ENCODE measurements at regions of chr11 and their contacts with region 1.

Region 1: GRCh38 chr11:35391922-35392813 is 27.2 kb downstream of the SLC1A2 start:
- DNase-seq: peak; percentile 94
- H3K4me3 ChIP-seq: no peak overlapping the region
- H3K27ac ChIP-seq: no peak overlapping the region
- H3K4me1 ChIP-seq: peaks cover 18% of the 10 kb centered on the region
- H3K27me3 ChIP-seq: peaks cover 4% of the 10 kb centered on the region
- CTCF ChIP-seq: peak; percentile 100

Region 2: GRCh38 chr11:34366522-34366921 is 1025.6 kb before region 1 on chr11:
- CTCF ChIA-PET with region 1: no interaction called
- POLR2A ChIA-PET with region 1: no interaction called
- intact Hi-C with region 1: loop called (anchors 5 kb)
- DNase-seq: peak; percentile 74
- H3K4me3 ChIP-seq: no peak overlapping the region
- H3K27ac ChIP-seq: no peak overlapping the region
- H3K4me1 ChIP-seq: peaks cover 9% of the 10 kb centered on the region
- H3K27me3 ChIP-seq: no peaks in the 10 kb centered on the region
- CTCF ChIP-seq: peak; percentile 80

Region 3: GRCh38 chr11:34585735-34586487 is 806.3 kb before region 1 on chr11:
- CTCF ChIA-PET with region 1: no interaction called
- POLR2A ChIA-PET with region 1: no interaction called
- intact Hi-C with region 1: loop called (anchors 1 kb)
- DNase-seq: peak; percentile 86
- H3K4me3 ChIP-seq: no peak overlapping the region
- H3K27ac ChIP-seq: no peak overlapping the region
- H3K4me1 ChIP-seq: peaks cover 3% of the 10 kb centered on the region
- H3K27me3 ChIP-seq: peaks cover 39% of the 10 kb centered on the region
- CTCF ChIP-seq: peak; percentile 94

Region 4: GRCh38 chr11:34926101-34926830 is 465.9 kb before region 1 on chr11:
- CTCF ChIA-PET with region 1: interaction called, 18 read pairs
- POLR2A ChIA-PET with region 1: no interaction called
- intact Hi-C with region 1: loop called (anchors 1 kb)
- DNase-seq: peak; percentile 89
- H3K4me3 ChIP-seq: no peak overlapping the region
- H3K27ac ChIP-seq: no peak overlapping the region
- H3K4me1 ChIP-seq: peaks cover 25% of the 10 kb centered on the region
- H3K27me3 ChIP-seq: no peaks in the 10 kb centered on the region
- CTCF ChIP-seq: peak; percentile 98

Region 5: DNA sequence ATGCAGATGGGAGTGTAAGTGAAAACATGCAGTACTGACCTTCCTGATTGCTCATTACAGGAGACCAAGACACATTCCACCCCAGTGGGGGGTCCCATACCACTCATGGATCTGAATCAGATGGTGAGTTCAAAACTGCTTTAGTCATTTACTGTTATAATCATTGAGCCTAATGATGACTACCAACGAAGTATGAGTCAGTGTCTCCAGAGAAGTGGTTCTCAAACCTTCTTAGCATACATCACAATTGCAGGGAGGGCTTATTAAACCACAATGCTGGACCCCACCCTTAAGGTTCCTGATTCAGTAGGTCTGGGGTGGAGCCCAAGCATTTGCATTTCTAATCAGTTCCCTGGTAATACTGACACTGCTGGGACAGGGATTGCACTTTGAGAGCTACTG is 177.4 kb before region 1 on chr11:
- CTCF ChIA-PET with region 1: no interaction called
- POLR2A ChIA-PET with region 1: no interaction called
- intact Hi-C with region 1: no loop called
- DNase-seq: peak; percentile 72
- H3K4me3 ChIP-seq: no peak overlapping the region
- H3K27ac ChIP-seq: no peak overlapping the region
- H3K4me1 ChIP-seq: no peaks in the 10 kb centered on the region
- H3K27me3 ChIP-seq: peaks cover 3% of the 10 kb centered on the region
- CTCF ChIP-seq: no peak

Region 6: GRCh38 chr11:35237860-35238715 is 154.1 kb before region 1 on chr11:
- CTCF ChIA-PET with region 1: no interaction called
- POLR2A ChIA-PET with region 1: no interaction called
- intact Hi-C with region 1: loop called (anchors 5 kb)
- DNase-seq: peak; percentile 94
- H3K4me3 ChIP-seq: no peak overlapping the region
- H3K27ac ChIP-seq: no peak overlapping the region
- H3K4me1 ChIP-seq: no peaks in the 10 kb centered on the region
- H3K27me3 ChIP-seq: peaks cover 32% of the 10 kb centered on the region
- CTCF ChIP-seq: peak; percentile 100